ENCODE measurements at regions of chr2 and their contacts with region 1.

Region 1: GRCh38 chr2:112685271-112685884 is 35.4 kb upstream of the NT5DC4 start:
- DNase-seq: no peak
- ATAC-seq: no peak
- H3K4me3 ChIP-seq: no peak overlapping the region
- H3K27ac ChIP-seq: no peak overlapping the region
- H3K4me1 ChIP-seq: no peaks in the 10 kb centered on the region
- H3K27me3 ChIP-seq: no peaks in the 10 kb centered on the region
- CTCF ChIP-seq: no peak
- POLR2A ChIP-seq: no peak

Region 2: DNA sequence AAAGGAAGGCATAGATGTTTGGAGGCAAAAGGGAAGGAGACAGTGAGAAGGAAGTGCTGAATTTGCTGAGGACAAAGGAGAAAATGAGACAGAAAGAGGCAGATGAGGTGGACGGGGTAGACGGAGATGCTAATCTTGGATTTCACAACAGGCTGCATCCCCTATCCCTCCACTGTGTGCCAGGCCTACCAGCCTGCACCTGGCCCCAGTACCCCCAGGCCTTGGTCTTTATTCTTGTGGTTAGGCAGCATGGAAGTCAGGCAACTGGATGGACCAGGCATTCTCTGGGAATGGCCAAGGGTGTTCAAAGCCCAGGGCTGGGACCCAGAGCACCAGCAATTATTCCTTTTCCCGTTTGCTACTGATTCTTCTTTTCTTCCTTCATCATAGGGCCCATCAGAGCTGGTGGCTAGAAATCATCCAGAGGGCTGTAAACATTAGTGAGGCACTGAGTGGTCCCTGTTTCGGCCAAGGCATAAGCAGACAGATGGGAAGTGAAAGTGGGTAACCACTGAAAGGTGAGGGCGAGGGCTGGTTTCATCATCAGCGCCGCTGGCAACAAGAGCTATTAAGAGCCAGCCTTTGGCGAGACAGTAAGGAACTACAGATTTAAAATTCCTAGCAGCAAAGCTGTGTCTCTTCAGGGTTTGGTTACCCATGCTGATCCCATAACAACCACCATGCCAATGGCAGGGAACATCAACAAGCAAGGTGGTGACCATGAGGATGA is 49.0 kb before region 1 on chr2:
- intact Hi-C with region 1: loop called (anchors 10 kb)
- DNase-seq: no peak
- ATAC-seq: no peak
- H3K4me3 ChIP-seq: no peak overlapping the region
- H3K27ac ChIP-seq: no peak overlapping the region
- H3K4me1 ChIP-seq: no peaks in the 10 kb centered on the region
- H3K27me3 ChIP-seq: no peaks in the 10 kb centered on the region
- CTCF ChIP-seq: no peak
- POLR2A ChIP-seq: no peak